ENCODE measurements at regions of chr1 and their contacts with region 1.

Region 1: GRCh38 chr1:224894918-224895317 is 34.6 kb upstream of the DNAH14 start:
- DNase-seq: no peak
- H3K4me3 ChIP-seq: no peak overlapping the region
- H3K27ac ChIP-seq: no peak overlapping the region
- H3K4me1 ChIP-seq: no peaks in the 10 kb centered on the region
- H3K27me3 ChIP-seq: no peaks in the 10 kb centered on the region
- CTCF ChIP-seq: peak in 2 of 3 experiments; percentile 60 to 62; a peak in 3 of 4 replicates
- EP300 ChIP-seq: no peak
- POLR2A ChIP-seq: no peak
- RAD21 ChIP-seq: peak; percentile 78 to 80

Region 2: GRCh38 chr1:224513787-224514209 is 381.1 kb before region 1 on chr1:
- CTCF ChIA-PET with region 1: interaction called, 22 read pairs
- POLR2A ChIA-PET with region 1: no interaction called
- DNase-seq: peak in 1 of 2 experiments; percentile 98
- H3K4me3 ChIP-seq: no peak overlapping the region
- H3K27ac ChIP-seq: no peak overlapping the region
- H3K4me1 ChIP-seq: peaks cover 0 to 2% (median 0%) of the 10 kb centered on the region in 4 experiments; a peak in 2 of 7 replicates
- H3K27me3 ChIP-seq: no peaks in the 10 kb centered on the region
- CTCF ChIP-seq: peak; percentile 84 to 99 (median 96)
- EP300 ChIP-seq: no peak
- POLR2A ChIP-seq: no peak
- RAD21 ChIP-seq: peak; percentile 97 to 98

Region 3: GRCh38 chr1:224700915-224701531 is 193.9 kb before region 1 on chr1:
- CTCF ChIA-PET with region 1: interaction called, 10 read pairs
- POLR2A ChIA-PET with region 1: no interaction called
- DNase-seq: peak in 1 of 2 experiments; percentile 66
- H3K4me3 ChIP-seq: no peak overlapping the region
- H3K27ac ChIP-seq: no peak overlapping the region
- H3K4me1 ChIP-seq: peaks cover 0 to 8% (median 7%) of the 10 kb centered on the region in 4 experiments; a peak in 6 of 7 replicates
- H3K27me3 ChIP-seq: no peaks in the 10 kb centered on the region
- CTCF ChIP-seq: peak; percentile 64 to 83 (median 74)
- EP300 ChIP-seq: no peak
- POLR2A ChIP-seq: no peak
- RAD21 ChIP-seq: peak; percentile 78 to 88

Region 4: GRCh38 chr1:224767676-224768075 is 127.2 kb before region 1 on chr1:
- CTCF ChIA-PET with region 1: no interaction called
- POLR2A ChIA-PET with region 1: no interaction called
- DNase-seq: no peak
- H3K4me3 ChIP-seq: no peak overlapping the region
- H3K27ac ChIP-seq: no peak overlapping the region
- H3K4me1 ChIP-seq: peaks cover 0 to 8% (median 2%) of the 10 kb centered on the region in 4 experiments; a peak in 3 of 7 replicates
- H3K27me3 ChIP-seq: no peaks in the 10 kb centered on the region; a peak in 1 of 7 replicates
- CTCF ChIP-seq: no peak
- EP300 ChIP-seq: no peak
- POLR2A ChIP-seq: no peak
- RAD21 ChIP-seq: no peak

Region 5: GRCh38 chr1:224828691-224829090 is 66.2 kb before region 1 on chr1:
- CTCF ChIA-PET with region 1: no interaction called
- POLR2A ChIA-PET with region 1: no interaction called
- DNase-seq: no peak
- H3K4me3 ChIP-seq: no peak overlapping the region
- H3K27ac ChIP-seq: no peak overlapping the region
- H3K4me1 ChIP-seq: no peaks in the 10 kb centered on the region
- H3K27me3 ChIP-seq: no peaks in the 10 kb centered on the region
- CTCF ChIP-seq: no peak
- EP300 ChIP-seq: no peak
- POLR2A ChIP-seq: no peak
- RAD21 ChIP-seq: no peak

Region 6: DNA sequence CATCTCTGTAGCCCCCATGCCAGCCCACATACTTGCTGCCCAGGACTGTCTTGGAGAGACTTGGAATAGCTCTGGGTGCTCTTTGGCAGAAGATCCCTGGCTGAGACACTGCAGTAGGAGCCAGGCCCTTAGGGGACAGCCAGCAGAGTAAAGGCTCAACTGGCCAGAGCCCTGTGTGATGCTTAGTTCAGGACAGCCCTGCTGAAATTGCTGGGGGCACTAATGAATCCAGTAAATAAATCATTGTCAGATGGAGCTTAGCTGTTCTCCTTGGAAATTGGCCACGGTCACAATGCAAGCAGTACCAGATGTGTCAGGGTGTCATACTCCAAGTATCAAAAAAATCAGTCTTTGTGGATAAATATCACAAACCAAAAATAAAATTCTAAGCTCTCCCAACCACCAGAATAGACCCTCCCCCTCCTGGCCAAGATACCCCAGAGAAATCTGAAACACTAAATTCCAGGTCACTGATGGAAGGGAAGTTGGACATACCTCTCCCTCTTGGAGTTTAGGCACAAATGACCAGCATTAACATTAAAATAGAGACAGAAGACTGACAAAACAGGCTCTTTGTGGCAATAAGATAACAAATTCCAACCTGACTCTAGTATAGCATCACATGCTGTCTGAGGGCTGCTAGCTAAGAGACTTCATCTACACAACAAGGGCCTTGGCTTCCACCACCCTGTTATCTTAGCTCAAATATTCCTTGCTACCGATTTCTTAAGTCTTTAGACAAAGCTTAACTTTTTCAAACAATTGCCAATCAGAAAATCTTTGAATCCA is 48.6 kb before region 1 on chr1:
- CTCF ChIA-PET with region 1: interaction called, 65 read pairs
- POLR2A ChIA-PET with region 1: interaction called, 3 read pairs
- DNase-seq: no peak
- H3K4me3 ChIP-seq: no peak overlapping the region
- H3K27ac ChIP-seq: no peak overlapping the region; the same call in 1 of the 2 replicates
- H3K4me1 ChIP-seq: peaks cover 0 to 4% (median 0%) of the 10 kb centered on the region in 4 experiments; a peak in 3 of 7 replicates
- H3K27me3 ChIP-seq: no peaks in the 10 kb centered on the region
- CTCF ChIP-seq: no peak
- EP300 ChIP-seq: no peak
- POLR2A ChIP-seq: no peak
- RAD21 ChIP-seq: no peak

Region 7: DNA sequence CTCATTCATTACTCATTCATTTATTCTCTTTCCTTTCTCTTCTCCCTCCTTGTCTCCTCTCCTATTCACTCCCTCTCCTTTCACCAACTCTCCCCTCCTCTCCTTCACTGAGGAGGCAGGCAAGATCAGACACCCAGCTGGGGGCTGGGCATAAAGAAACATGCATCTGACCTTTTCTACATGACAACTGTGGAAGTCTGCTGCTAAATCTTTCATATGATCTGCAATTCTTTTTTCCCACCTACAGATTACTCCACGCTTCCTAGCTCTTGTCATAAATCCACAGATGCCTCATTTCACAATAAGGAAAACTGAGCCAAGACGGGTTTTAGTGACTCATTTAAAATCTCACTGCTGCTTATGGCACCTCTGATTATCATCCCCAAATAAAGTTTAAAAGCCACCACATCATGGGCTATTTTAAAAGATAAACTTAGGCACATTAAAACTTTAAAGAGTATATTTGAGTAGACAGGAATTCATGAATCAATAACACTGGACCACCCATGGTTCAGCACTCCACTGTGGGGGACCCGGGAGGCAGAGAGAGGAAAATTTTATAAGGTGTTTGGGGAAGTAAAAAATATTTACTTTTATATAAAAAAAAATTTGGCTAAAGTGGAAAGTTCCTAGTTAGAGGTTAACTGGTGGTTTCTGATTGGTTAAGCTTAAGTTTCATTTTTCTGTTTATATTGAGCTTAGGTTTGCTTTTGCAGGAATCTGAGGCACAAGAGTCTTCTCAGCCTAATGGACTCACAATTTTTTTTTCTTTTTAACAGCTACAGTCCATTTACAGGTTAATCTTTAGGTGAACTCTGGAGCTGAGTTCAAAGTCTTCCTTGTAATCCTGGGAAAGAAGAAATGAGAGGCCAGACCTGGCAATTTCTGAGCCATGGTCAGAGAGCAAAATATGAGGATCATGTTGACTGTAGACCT is 21.2 kb before region 1 on chr1:
- CTCF ChIA-PET with region 1: interaction called, 50 read pairs
- POLR2A ChIA-PET with region 1: no interaction called
- DNase-seq: no peak
- H3K4me3 ChIP-seq: no peak overlapping the region
- H3K27ac ChIP-seq: no peak overlapping the region
- H3K4me1 ChIP-seq: peaks cover 0 to 16% (median 10%) of the 10 kb centered on the region in 4 experiments; a peak in 6 of 7 replicates
- H3K27me3 ChIP-seq: no peaks in the 10 kb centered on the region
- CTCF ChIP-seq: no peak
- EP300 ChIP-seq: no peak
- POLR2A ChIP-seq: no peak
- RAD21 ChIP-seq: no peak

Region 8: GRCh38 chr1:224884361-224884801 is 10.5 kb before region 1 on chr1:
- CTCF ChIA-PET with region 1: interaction called, 50 read pairs
- POLR2A ChIA-PET with region 1: interaction called, 3 read pairs
- DNase-seq: no peak
- H3K4me3 ChIP-seq: no peak overlapping the region
- H3K27ac ChIP-seq: no peak overlapping the region
- H3K4me1 ChIP-seq: peaks cover 6 to 17% (median 14%) of the 10 kb centered on the region in 4 experiments; a peak in 5 of 7 replicates
- H3K27me3 ChIP-seq: no peaks in the 10 kb centered on the region
- CTCF ChIP-seq: no peak
- EP300 ChIP-seq: no peak
- POLR2A ChIP-seq: no peak
- RAD21 ChIP-seq: no peak

Region 9: GRCh38 chr1:224922404-224923164 is 27.7 kb after region 1 on chr1:
- CTCF ChIA-PET with region 1: interaction called, 16 read pairs
- POLR2A ChIA-PET with region 1: no interaction called
- DNase-seq: peak in 1 of 2 experiments; percentile 54
- H3K4me3 ChIP-seq: no peak overlapping the region
- H3K27ac ChIP-seq: no peak overlapping the region
- H3K4me1 ChIP-seq: 0 out of 7 replicates have a peak, but pooled peaks cover 0 to 2% (median 0%) of the 10 kb centered on the region in 4 experiments
- H3K27me3 ChIP-seq: no peaks in the 10 kb centered on the region
- CTCF ChIP-seq: peak in 2 of 3 experiments; percentile 61 to 79; a peak in 3 of 4 replicates
- EP300 ChIP-seq: no peak
- POLR2A ChIP-seq: no peak
- RAD21 ChIP-seq: peak; percentile 91 to 93

Measured in H1 (cell line).